ENCODE measurements at regions of chr12 and their contacts with region 1.

Region 1: DNA sequence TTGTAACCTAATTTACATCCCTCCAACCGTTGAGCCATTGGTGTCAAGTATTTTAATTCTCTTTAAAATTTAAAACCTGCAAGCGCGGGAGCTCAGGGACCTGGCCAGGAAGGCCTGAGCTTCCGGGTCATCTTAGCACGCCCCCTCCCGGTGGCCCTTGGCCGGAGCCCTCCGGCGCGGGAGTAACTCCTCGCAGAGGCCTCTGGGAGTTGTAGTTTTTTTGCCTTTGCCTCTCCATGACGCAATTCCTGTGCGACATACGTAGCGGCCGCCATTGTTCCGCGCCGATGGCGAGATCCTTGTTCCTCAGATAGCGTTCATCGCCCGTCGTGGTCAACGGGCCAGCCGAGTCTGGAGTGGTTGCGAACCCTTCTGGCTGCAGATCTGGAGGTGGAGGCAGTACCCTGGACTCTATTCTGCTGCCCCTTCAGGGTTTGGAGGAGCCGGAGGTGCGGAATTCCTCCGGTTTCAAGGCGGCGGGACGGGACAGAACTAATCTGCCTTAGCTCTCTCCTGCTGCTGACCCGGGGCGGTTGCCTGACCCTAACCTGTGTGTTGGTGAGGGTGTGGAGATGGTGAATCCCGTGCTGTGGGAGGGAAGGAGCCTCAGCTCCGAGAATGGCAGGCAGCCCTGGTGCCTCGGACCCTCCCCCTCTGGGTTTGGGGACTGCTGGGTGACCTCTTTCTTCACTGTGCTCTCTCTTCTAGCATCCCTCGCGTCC is at the start of gene ZNF268:
- DNase-seq: peak; percentile 94
- H3K4me3 ChIP-seq: peak within 1 kb of the TSS; percentile 64 to 82 (median 76)
- H3K27ac ChIP-seq: peak within 1 kb of the TSS; percentile 69 to 81 (median 76)
- H3K4me1 ChIP-seq: peaks cover 0 to 13% (median 6%) of the 10 kb centered on the region in 4 donors
- H3K27me3 ChIP-seq: no peaks in the 10 kb centered on the region
- CTCF ChIP-seq: peak; percentile 45 to 68 (median 58)
- EP300 ChIP-seq: peak in 2 of 4 donors; percentile 13 to 19
- POLR2A ChIP-seq: no peak
- total RNA-seq, gene ZNF268: 12.8 to 21.9 (median 19.5) TPM

Region 2: GRCh38 chr12:132972374-132972773 is 209.0 kb before region 1 on chr12:
- intact Hi-C with region 1: no loop called
- DNase-seq: no peak
- H3K4me3 ChIP-seq: no peak overlapping the region
- H3K27ac ChIP-seq: no peak overlapping the region
- H3K4me1 ChIP-seq: no peaks in the 10 kb centered on the region
- H3K27me3 ChIP-seq: no peaks in the 10 kb centered on the region
- CTCF ChIP-seq: no peak
- EP300 ChIP-seq: no peak
- POLR2A ChIP-seq: no peak

Region 3: DNA sequence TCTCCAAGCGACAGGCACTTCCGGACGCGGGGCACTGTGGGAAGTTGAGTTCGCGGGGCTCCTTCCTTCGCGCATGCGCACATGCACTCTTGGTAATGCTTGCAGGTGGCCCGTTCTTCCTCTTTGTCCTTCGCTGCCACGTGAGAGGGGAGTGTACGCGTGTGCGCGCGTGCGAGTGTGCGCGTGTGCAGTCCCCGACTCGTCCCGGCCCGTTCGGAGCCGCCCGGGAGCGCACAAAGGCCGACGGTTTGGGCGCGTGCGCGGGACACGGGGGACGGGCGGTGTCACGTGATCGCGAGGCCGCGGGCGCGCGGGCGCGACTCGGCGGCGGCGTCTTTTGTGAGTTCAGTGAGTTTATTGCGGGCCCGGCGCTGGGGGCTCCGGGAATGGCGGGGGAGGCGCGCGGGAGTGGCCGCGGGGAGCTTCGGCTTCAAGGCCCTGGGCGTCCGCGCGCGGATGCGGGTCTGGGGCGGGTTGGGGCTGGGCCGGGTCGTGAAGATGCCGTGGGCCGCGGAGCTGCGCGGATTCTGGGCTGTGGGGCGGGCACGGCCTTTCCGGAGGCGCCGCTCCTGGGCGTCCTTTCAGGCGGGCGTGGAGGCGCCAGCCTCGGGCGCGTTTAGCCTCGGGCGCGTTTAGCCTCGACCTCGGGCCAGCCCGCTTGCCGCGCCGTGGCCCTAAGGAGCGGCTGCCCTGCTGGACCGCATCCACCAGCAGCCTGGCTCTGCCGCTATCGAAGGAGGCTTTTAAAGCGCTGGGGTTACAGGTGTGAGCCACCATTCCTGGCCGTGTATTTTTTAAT is 144.0 kb before region 1 on chr12 and contains the start of gene ZNF84:
- intact Hi-C with region 1: loop called (anchors 1 kb)
- DNase-seq: peak; percentile 98
- H3K4me3 ChIP-seq: peak within 1 kb of the TSS; percentile 64 to 84 (median 80)
- H3K27ac ChIP-seq: peak within 1 kb of the TSS; percentile 90 to 97 (median 95)
- H3K4me1 ChIP-seq: peaks cover 0 to 13% (median 3%) of the 10 kb centered on the region in 4 donors
- H3K27me3 ChIP-seq: no peaks in the 10 kb centered on the region
- CTCF ChIP-seq: no peak
- EP300 ChIP-seq: peak in 1 of 4 donors; percentile 68
- POLR2A ChIP-seq: peak; percentile 18 to 33
- total RNA-seq, gene ZNF84: 28.8 to 32.7 (median 31.4) TPM